MCF 10A (cell line): ENCODE measurements at regions of chr13 and their contacts with region 1.

Region 1: GRCh38 chr13:99200432-99201167 is at the start of gene UBAC2:
- DNase-seq: peak; percentile 96
- H3K4me3 Mint-ChIP-seq: peak within 1 kb of the TSS; percentile 94
- H3K27ac Mint-ChIP-seq: peak within 1 kb of the TSS; percentile 97
- H3K4me1 Mint-ChIP-seq: peaks cover 38% of the 10 kb centered on the region
- H3K27me3 Mint-ChIP-seq: no peaks in the 10 kb centered on the region
- CTCF ChIP-seq: no peak
- total RNA-seq, gene UBAC2: 74.7 and 78.3 TPM in 2 replicates

Region 2: GRCh38 chr13:99045396-99045795 is 155.2 kb before region 1 on chr13:
- CTCF ChIA-PET with region 1: no interaction called
- POLR2A ChIA-PET with region 1: interaction called, 13 read pairs
- intact Hi-C with region 1: no loop called
- DNase-seq: no peak
- H3K4me3 Mint-ChIP-seq: peak overlapping the region; percentile 13
- H3K27ac Mint-ChIP-seq: peak overlapping the region; percentile 90
- H3K4me1 Mint-ChIP-seq: peaks cover 45% of the 10 kb centered on the region
- H3K27me3 Mint-ChIP-seq: no peaks in the 10 kb centered on the region
- CTCF ChIP-seq: no peak

Region 3: DNA sequence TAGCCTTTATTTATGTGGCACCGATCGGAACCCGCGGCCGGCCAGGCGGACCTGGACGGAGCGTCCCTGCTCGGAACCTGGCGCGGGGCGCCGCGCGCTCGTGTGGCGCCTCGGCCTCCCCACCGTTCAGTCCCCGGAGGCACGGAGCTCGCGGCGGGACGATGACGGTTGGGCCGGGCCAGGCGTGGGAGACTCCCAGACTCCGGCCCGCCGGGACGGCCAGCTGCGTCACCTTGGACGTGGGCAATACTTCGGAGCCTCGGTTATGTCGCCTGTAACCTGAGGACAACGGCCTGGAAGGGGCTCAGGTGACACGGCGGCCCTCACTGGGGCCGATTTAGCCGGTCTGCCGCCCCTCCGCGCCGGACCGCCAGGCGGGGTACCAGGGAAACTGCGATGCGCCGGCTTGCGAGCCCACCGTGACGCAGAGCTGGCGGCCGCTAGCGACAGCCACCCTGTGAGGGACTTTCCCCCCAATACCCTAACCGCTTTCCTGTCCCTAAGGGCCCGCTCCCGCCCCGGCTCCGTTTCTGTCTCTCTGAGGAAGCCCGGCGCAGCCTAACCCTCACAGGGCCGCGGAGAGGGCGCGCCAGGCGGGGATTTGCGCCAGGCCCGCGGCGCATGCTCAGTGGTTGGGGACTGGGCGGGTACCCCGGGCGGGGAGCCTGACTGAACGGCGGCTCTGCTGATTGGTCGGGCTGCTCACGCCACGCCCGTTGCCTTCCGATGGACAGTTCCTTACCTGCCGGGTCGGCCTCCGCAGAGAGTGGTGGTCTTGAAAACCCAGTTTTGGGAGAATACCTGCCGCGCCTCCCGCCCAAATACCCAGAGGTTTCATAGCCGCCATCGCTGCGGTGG is 113.3 kb before region 1 on chr13:
- CTCF ChIA-PET with region 1: no interaction called
- POLR2A ChIA-PET with region 1: interaction called, 80 read pairs
- intact Hi-C with region 1: no loop called
- DNase-seq: peak; percentile 89
- H3K4me3 Mint-ChIP-seq: peak overlapping the region; percentile 98
- H3K27ac Mint-ChIP-seq: peak overlapping the region; percentile 85
- H3K4me1 Mint-ChIP-seq: peaks cover 21% of the 10 kb centered on the region
- H3K27me3 Mint-ChIP-seq: no peaks in the 10 kb centered on the region
- CTCF ChIP-seq: no peak

Region 4: DNA sequence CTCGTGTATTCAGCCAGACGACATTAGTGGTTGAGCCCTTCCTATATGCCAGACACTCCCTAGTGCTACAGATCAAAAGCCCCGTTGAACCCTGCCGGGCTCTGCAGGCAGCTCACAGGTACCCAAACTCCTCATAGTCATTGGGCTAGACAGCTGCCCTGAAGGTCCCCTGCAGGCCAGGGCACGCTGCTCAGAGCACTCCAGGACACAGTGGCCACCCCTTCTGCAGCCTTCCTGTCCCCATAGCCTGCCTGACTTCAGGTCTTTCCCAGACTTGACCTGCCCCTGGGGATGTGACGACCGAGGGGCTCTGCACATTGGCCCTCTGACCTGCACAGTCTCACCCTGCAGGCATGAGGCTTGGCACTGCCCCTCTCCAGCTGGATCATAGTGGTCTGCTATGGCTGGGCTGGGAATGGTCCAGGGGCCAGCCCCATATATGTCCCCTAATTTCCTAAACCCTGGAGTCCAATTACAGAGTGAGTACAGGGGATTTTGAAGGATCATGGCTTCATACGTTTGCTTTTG is 64.1 kb before region 1 on chr13:
- CTCF ChIA-PET with region 1: no interaction called
- POLR2A ChIA-PET with region 1: no interaction called
- intact Hi-C with region 1: no loop called
- DNase-seq: no peak
- H3K4me3 Mint-ChIP-seq: no peak overlapping the region
- H3K27ac Mint-ChIP-seq: no peak overlapping the region
- H3K4me1 Mint-ChIP-seq: peaks cover 6% of the 10 kb centered on the region
- H3K27me3 Mint-ChIP-seq: no peaks in the 10 kb centered on the region
- CTCF ChIP-seq: no peak

Region 5: GRCh38 chr13:99151516-99151915 is 49.1 kb before region 1 on chr13:
- CTCF ChIA-PET with region 1: interaction called, 3 read pairs
- POLR2A ChIA-PET with region 1: interaction called, 41 read pairs
- intact Hi-C with region 1: no loop called
- DNase-seq: peak; percentile 96
- H3K4me3 Mint-ChIP-seq: peak overlapping the region; percentile 11
- H3K27ac Mint-ChIP-seq: peak overlapping the region; percentile 91
- H3K4me1 Mint-ChIP-seq: peaks cover 31% of the 10 kb centered on the region
- H3K27me3 Mint-ChIP-seq: no peaks in the 10 kb centered on the region
- CTCF ChIP-seq: no peak

Region 6: GRCh38 chr13:99182439-99182838 is 18.2 kb before region 1 on chr13:
- CTCF ChIA-PET with region 1: interaction called, 23 read pairs
- POLR2A ChIA-PET with region 1: interaction called, 61 read pairs
- intact Hi-C with region 1: no loop called
- DNase-seq: no peak
- H3K4me3 Mint-ChIP-seq: no peak overlapping the region
- H3K27ac Mint-ChIP-seq: no peak overlapping the region
- H3K4me1 Mint-ChIP-seq: peaks cover 6% of the 10 kb centered on the region
- H3K27me3 Mint-ChIP-seq: no peaks in the 10 kb centered on the region
- CTCF ChIP-seq: no peak

Region 7: GRCh38 chr13:99231721-99232120 is 31.1 kb after region 1 on chr13:
- CTCF ChIA-PET with region 1: interaction called, 3 read pairs
- POLR2A ChIA-PET with region 1: interaction called, 17 read pairs
- intact Hi-C with region 1: no loop called
- DNase-seq: no peak
- H3K4me3 Mint-ChIP-seq: no peak overlapping the region
- H3K27ac Mint-ChIP-seq: no peak overlapping the region
- H3K4me1 Mint-ChIP-seq: peaks cover 16% of the 10 kb centered on the region
- H3K27me3 Mint-ChIP-seq: no peaks in the 10 kb centered on the region
- CTCF ChIP-seq: no peak

Region 8: GRCh38 chr13:99314640-99315176 is 114.1 kb after region 1 on chr13:
- CTCF ChIA-PET with region 1: no interaction called
- POLR2A ChIA-PET with region 1: no interaction called
- intact Hi-C with region 1: no loop called
- DNase-seq: no peak
- H3K4me3 Mint-ChIP-seq: no peak overlapping the region
- H3K27ac Mint-ChIP-seq: no peak overlapping the region
- H3K4me1 Mint-ChIP-seq: peaks cover 14% of the 10 kb centered on the region
- H3K27me3 Mint-ChIP-seq: no peaks in the 10 kb centered on the region
- CTCF ChIP-seq: no peak